Activated T-helper 2 cell treated with anti-CD3 and anti-CD28 coated beads, Interferon-gamma antibody, Interleukin-2, Interleukin-4, amounts not matched to agents 10 μg/mL and 5 μg/mL and 100 μg/mL, durations not matched to agents 14 hours and 24 hours and 36 hours (primary cell): ENCODE measurements at regions of chr11 and their contacts with region 1.

Region 1: GRCh38 chr11:44538375-44539054 is 26.9 kb upstream of the CD82 start:
- DNase-seq: peak; percentile 68
- H3K4me3 Mint-ChIP-seq: no peak overlapping the region
- H3K27ac Mint-ChIP-seq: no peak overlapping the region
- H3K4me1 Mint-ChIP-seq: no peaks in the 10 kb centered on the region
- H3K27me3 Mint-ChIP-seq: no peaks in the 10 kb centered on the region

Region 2: DNA sequence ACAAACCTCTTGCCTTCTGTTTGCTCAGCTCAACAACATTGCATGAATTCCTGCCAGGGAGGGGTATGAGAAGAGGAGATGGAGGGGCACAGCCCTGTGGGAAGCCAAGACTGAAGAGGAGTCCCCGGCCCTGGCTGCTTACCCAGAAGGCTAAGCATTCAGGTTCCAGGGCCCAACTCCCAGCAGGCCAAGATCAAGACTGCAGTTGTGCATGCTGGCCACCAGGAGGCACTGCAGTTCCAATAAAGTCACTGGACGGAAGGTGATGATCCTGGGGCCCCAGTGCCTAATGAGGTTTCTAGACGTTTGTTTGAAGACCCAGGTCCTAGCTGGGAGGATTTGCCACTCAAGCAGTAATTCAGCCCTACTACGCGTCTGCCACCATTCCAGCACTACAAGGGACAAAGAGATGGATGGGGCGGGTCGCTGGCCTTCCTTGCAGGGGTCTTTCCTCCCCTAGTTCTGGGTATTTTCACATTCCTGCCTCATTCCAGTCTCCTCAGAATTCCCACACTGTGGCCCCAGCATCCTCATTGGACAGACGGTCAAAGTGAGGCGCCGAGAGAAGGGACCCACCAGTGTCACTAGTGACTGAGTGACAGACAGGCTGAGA is 252.1 kb before region 1 on chr11:
- intact Hi-C with region 1: loop called (anchors 1 kb)
- DNase-seq: peak; percentile 47
- H3K4me3 Mint-ChIP-seq: no peak overlapping the region
- H3K27ac Mint-ChIP-seq: no peak overlapping the region
- H3K4me1 Mint-ChIP-seq: no peaks in the 10 kb centered on the region
- H3K27me3 Mint-ChIP-seq: no peaks in the 10 kb centered on the region

Region 3: DNA sequence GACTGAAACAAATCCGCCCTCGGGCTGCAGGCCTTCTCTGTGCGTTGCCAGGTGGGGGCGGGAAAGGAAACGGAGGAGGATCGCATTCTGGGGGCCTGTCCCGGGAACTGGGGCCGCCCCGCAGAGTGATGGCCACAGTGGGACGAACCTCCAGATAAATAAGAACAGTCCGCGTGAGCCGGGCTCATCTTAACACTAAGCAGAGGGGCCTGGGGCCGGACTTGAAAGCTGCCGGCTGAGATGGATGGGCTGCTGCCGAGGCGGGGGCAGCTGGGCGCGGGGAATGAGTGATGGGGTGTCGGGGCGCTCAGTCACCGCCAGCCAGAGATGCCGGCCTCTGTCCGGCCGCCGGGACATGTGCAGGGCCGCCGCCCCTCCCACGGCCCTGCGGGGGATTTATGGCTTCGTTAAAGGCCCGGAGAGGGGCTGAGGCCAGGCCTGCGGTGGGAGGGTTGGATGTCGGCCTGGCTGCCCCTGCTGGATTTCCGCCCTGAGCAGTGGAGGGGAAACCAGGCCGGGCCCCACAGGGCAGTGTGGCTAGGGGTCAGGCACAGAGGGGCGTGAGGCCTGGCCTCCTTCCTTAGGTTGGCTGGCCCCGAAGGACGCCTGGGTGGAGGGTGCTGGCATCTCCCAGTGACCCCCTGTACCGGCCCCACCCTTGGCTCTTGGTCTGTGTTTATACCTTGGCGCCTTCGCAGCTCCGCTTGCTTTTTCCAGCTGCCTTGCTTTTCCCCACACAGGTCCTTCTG is 18.4 kb before region 1 on chr11:
- intact Hi-C with region 1: loop called (anchors 1 kb)
- DNase-seq: no peak
- H3K4me3 Mint-ChIP-seq: no peak overlapping the region
- H3K27ac Mint-ChIP-seq: no peak overlapping the region
- H3K4me1 Mint-ChIP-seq: peaks cover 6% of the 10 kb centered on the region
- H3K27me3 Mint-ChIP-seq: peaks cover 42% of the 10 kb centered on the region